ENCODE measurements at regions of chr17 and their contacts with region 1.

Region 1: GRCh38 chr17:61412143-61412859 is 12.7 kb downstream of the TBX2 start:
- DNase-seq: peak; percentile 84 to 93 (median 87)
- H3K4me3 ChIP-seq: peak overlapping the region; percentile 61
- H3K27ac ChIP-seq: peak overlapping the region; percentile 31 to 80
- H3K4me1 ChIP-seq: peaks cover 9% of the 10 kb centered on the region
- H3K27me3 ChIP-seq: no peaks in the 10 kb centered on the region
- CTCF ChIP-seq: peak; percentile 97 to 99 (median 98)
- EP300 ChIP-seq: no peak
- POLR2A ChIP-seq: peak; percentile 51

Region 2: DNA sequence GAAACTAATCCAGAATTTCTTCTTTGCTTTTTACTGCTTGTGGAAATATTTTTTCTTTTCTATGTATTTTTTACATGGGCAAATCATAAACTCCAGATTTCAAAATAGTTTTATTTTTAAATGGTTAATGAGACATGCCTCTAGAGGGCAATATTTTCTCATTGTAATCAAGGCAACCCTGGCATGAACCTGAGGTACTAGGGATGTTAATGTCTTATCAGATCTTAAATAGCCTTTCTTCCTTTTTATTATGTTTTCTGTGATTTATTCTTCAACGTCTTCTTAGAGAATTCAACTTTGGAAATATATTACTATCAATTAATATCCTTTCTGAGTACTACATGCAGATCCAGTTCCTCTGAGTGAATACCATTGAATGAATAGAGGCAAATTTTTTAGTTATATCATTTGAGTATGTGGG is 410.0 kb before region 1 on chr17:
- intact Hi-C with region 1: loop called in 1 of 4 experiments (anchors 10 kb)
- DNase-seq: no peak
- H3K4me3 ChIP-seq: no peak overlapping the region
- H3K27ac ChIP-seq: no peak overlapping the region
- H3K4me1 ChIP-seq: no peaks in the 10 kb centered on the region
- H3K27me3 ChIP-seq: no peaks in the 10 kb centered on the region
- CTCF ChIP-seq: peak in 2 of 3 donors; percentile 16 to 26
- EP300 ChIP-seq: no peak
- POLR2A ChIP-seq: no peak

Region 3: GRCh38 chr17:61168468-61168867 is 243.8 kb before region 1 on chr17:
- intact Hi-C with region 1: no loop called
- DNase-seq: no peak
- H3K4me3 ChIP-seq: no peak overlapping the region
- H3K27ac ChIP-seq: no peak overlapping the region
- H3K4me1 ChIP-seq: no peaks in the 10 kb centered on the region
- H3K27me3 ChIP-seq: no peaks in the 10 kb centered on the region
- CTCF ChIP-seq: no peak
- EP300 ChIP-seq: no peak
- POLR2A ChIP-seq: no peak

Region 4: GRCh38 chr17:61837175-61838051 is 425.1 kb after region 1 on chr17:
- intact Hi-C with region 1: loop called in 1 of 4 experiments (anchors 10 kb)
- DNase-seq: peak; percentile 16 to 56 (median 39)
- H3K4me3 ChIP-seq: no peak overlapping the region
- H3K27ac ChIP-seq: no peak overlapping the region
- H3K4me1 ChIP-seq: no peaks in the 10 kb centered on the region
- H3K27me3 ChIP-seq: no peaks in the 10 kb centered on the region
- CTCF ChIP-seq: peak; percentile 19 to 30 (median 22)
- EP300 ChIP-seq: no peak
- POLR2A ChIP-seq: no peak

Region 5: DNA sequence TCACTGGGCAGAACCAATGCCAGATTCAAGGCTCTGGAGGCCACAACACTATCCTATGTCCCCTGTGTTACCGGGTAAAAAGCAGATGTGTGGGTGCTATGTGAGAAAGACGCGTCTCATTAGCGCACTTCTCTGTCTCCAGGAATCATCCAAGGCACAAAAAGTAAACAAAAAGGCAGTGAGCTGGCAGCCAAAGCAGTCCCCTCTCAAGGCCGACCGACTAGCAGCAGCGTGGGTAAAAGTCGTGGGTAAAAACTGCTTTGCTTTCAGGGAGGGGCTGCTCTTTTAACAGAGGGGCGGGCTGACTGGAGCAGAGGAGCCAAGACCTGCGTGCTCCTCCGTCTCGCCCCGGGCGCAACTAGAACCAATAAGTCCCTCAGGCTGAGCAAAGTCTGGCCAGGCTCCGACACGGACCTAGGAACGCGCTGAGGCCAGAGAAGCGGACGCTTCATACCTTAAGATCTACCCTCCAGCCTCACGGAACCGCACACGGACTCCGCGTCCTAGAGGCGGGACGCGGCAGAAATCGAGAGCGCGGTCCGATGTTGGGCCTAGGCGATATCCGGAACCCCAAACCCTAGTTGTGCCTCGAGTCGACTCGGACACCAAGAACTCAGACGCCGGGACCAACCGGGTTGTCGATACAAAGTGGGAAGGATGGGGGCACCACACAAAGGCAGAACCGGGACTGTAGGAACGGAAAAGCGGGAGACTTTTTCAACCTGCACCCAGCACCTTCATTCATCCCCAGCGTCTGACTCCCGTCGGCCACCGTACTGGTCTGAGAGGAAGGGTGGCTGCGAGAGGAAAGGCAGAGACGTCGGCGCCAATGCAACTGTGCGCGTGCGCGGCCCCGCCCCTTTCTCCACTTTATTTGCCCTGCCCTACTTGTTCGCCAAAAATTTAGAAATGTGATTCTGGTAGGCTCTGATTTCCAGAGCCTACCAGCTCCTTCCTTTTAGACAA is 515.2 kb after region 1 on chr17 and contains the start of gene INTS2:
- intact Hi-C with region 1: loop called in 1 of 4 experiments (anchors 10 kb)
- DNase-seq: peak; percentile 94 to 98 (median 97)
- H3K4me3 ChIP-seq: peak within 1 kb of the TSS; percentile 72
- H3K27ac ChIP-seq: peak within 1 kb of the TSS; percentile 79 to 86
- H3K4me1 ChIP-seq: peaks cover 3% of the 10 kb centered on the region
- H3K27me3 ChIP-seq: no peaks in the 10 kb centered on the region
- CTCF ChIP-seq: no peak
- EP300 ChIP-seq: no peak
- POLR2A ChIP-seq: peak; percentile 87
- total RNA-seq, gene INTS2: 5.8 to 11.0 (median 9.1) TPM

Measured in ovary (tissue), 10 donors.